CD8-positive, alpha-beta memory T cell (primary cell): ENCODE measurements at regions of chr7 and their contacts with region 1.

Region 1: GRCh38 chr7:76291343-76292212 is 10.9 kb upstream of the HSPB1 start:
- DNase-seq: peak; percentile 68 to 87 (median 75)
- H3K4me3 ChIP-seq: no peak overlapping the region
- H3K4me3 Mint-ChIP-seq: no peak overlapping the region
- H3K27ac ChIP-seq: peak overlapping the region; percentile 38
- H3K27ac Mint-ChIP-seq: peak overlapping the region in 2 of 8 donors; percentile 3 to 66
- H3K4me1 ChIP-seq: peaks cover 10% of the 10 kb centered on the region
- H3K4me1 Mint-ChIP-seq: peaks cover 4 to 8% (median 6%) of the 10 kb centered on the region in 3 donors
- H3K27me3 ChIP-seq: no peaks in the 10 kb centered on the region
- H3K27me3 Mint-ChIP-seq: peaks cover 4 to 9% of the 10 kb centered on the region in 2 donors

Region 2: GRCh38 chr7:76037310-76037709 is 254.3 kb before region 1 on chr7:
- CTCF ChIA-PET with region 1: no interaction called
- POLR2A ChIA-PET with region 1: no interaction called
- DNase-seq: no peak
- H3K4me3 ChIP-seq: no peak overlapping the region
- H3K4me3 Mint-ChIP-seq: no peak overlapping the region
- H3K27ac ChIP-seq: no peak overlapping the region
- H3K27ac Mint-ChIP-seq: no peak overlapping the region
- H3K4me1 ChIP-seq: no peaks in the 10 kb centered on the region
- H3K4me1 Mint-ChIP-seq: peaks cover 6 to 15% (median 10%) of the 10 kb centered on the region in 3 donors
- H3K27me3 ChIP-seq: no peaks in the 10 kb centered on the region
- H3K27me3 Mint-ChIP-seq: no peaks in the 10 kb centered on the region

Region 3: GRCh38 chr7:76155938-76156337 is 135.6 kb before region 1 on chr7:
- CTCF ChIA-PET with region 1: no interaction called
- POLR2A ChIA-PET with region 1: no interaction called
- DNase-seq: no peak
- H3K4me3 ChIP-seq: no peak overlapping the region
- H3K4me3 Mint-ChIP-seq: no peak overlapping the region
- H3K27ac ChIP-seq: no peak overlapping the region
- H3K27ac Mint-ChIP-seq: no peak overlapping the region
- H3K4me1 ChIP-seq: peaks cover 27% of the 10 kb centered on the region
- H3K4me1 Mint-ChIP-seq: peaks cover 6 to 21% (median 13%) of the 10 kb centered on the region in 3 donors
- H3K27me3 ChIP-seq: no peaks in the 10 kb centered on the region
- H3K27me3 Mint-ChIP-seq: peaks cover 0 to 2% of the 10 kb centered on the region in 2 donors

Region 4: DNA sequence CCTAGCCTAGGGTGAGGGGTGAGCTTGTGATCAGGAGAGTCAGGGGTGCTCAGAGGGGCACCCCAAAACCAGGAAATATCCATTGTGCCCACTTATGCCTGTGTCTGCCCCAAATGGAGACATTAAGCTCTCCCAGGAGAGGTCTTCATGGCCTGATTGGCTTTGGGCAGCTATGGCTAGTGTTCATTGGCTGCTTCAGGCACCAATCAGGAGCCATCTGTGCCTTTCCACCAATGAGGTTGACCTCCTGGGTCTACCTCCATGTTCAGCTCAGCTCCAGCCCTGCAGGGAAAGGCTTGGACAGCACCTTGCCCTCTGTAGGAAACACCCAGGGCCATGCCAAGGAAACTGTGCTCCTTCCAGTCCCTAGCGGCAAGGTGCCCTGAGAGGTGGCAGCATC is 13.0 kb before region 1 on chr7:
- CTCF ChIA-PET with region 1: interaction called, 11 read pairs
- POLR2A ChIA-PET with region 1: no interaction called
- DNase-seq: no peak
- H3K4me3 ChIP-seq: no peak overlapping the region
- H3K4me3 Mint-ChIP-seq: no peak overlapping the region
- H3K27ac ChIP-seq: no peak overlapping the region
- H3K27ac Mint-ChIP-seq: no peak overlapping the region
- H3K4me1 ChIP-seq: peaks cover 11% of the 10 kb centered on the region
- H3K4me1 Mint-ChIP-seq: peaks cover 11 to 22% (median 21%) of the 10 kb centered on the region in 3 donors
- H3K27me3 ChIP-seq: peaks cover 12% of the 10 kb centered on the region
- H3K27me3 Mint-ChIP-seq: peaks cover 39 to 54% of the 10 kb centered on the region in 2 donors

Region 5: DNA sequence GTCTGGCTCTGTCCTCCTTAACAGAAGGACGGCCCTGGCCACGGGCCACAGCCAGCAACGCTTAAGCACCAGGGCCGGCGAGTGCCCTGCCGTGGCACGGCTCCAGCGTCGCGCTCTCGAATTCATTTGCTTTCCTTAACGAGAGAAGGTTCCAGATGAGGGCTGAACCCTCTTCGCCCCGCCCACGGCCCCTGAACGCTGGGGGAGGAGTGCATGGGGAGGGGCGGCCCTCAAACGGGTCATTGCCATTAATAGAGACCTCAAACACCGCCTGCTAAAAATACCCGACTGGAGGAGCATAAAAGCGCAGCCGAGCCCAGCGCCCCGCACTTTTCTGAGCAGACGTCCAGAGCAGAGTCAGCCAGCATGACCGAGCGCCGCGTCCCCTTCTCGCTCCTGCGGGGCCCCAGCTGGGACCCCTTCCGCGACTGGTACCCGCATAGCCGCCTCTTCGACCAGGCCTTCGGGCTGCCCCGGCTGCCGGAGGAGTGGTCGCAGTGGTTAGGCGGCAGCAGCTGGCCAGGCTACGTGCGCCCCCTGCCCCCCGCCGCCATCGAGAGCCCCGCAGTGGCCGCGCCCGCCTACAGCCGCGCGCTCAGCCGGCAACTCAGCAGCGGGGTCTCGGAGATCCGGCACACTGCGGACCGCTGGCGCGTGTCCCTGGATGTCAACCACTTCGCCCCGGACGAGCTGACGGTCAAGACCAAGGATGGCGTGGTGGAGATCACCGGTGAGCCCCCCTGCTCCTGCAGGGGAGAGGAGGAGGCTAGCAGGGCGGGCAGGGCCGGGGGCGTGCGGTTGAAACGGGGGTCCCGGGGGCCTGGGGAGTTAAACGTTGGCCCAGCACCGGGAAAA is 11.0 kb after region 1 on chr7 and contains the start of gene HSPB1:
- CTCF ChIA-PET with region 1: interaction called, 11 read pairs
- POLR2A ChIA-PET with region 1: interaction called, 3 read pairs
- DNase-seq: peak; percentile 33 to 77 (median 53)
- H3K4me3 ChIP-seq: peak within 1 kb of the TSS; percentile 73
- H3K4me3 Mint-ChIP-seq: peak within 1 kb of the TSS; percentile 88 to 97 (median 92)
- H3K27ac ChIP-seq: peak within 1 kb of the TSS; percentile 65
- H3K27ac Mint-ChIP-seq: peak within 1 kb of the TSS; percentile 77 to 96 (median 86)
- H3K4me1 ChIP-seq: peaks cover 7% of the 10 kb centered on the region
- H3K4me1 Mint-ChIP-seq: peaks cover 18 to 20% (median 18%) of the 10 kb centered on the region in 3 donors
- H3K27me3 ChIP-seq: no peaks in the 10 kb centered on the region
- H3K27me3 Mint-ChIP-seq: peaks cover 0 to 5% of the 10 kb centered on the region in 2 donors
- total RNA-seq, gene HSPB1: 80.7 to 84.1 TPM

Region 6: DNA sequence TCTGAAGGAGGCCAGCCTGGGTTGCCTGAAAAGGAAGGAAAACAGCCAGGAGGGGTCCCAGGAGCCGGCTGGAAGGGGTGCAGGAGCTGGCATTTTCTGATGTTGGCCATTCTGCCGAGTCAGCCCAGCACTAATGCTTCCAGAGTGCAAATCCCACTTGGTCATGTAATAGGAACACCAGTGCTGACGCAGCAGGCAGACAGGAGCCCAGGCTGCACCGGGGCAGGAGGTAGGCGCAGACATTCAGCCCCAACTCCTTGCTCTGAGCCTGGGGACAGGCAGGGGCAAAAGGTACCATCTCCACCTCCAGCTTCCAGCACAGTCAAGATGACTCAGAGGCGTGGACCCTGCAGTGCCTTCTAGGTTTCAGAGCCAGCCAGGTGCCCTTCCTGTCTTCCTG is 77.4 kb after region 1 on chr7:
- CTCF ChIA-PET with region 1: no interaction called
- POLR2A ChIA-PET with region 1: no interaction called
- DNase-seq: no peak
- H3K4me3 ChIP-seq: no peak overlapping the region
- H3K4me3 Mint-ChIP-seq: no peak overlapping the region
- H3K27ac ChIP-seq: no peak overlapping the region
- H3K27ac Mint-ChIP-seq: no peak overlapping the region
- H3K4me1 ChIP-seq: no peaks in the 10 kb centered on the region
- H3K4me1 Mint-ChIP-seq: peaks cover 0 to 9% (median 3%) of the 10 kb centered on the region in 3 donors
- H3K27me3 ChIP-seq: no peaks in the 10 kb centered on the region
- H3K27me3 Mint-ChIP-seq: peaks cover 6 to 26% of the 10 kb centered on the region in 2 donors